Ovary (tissue), 10 donors: ENCODE measurements at regions of chr4 and their contacts with region 1.

Region 1: DNA sequence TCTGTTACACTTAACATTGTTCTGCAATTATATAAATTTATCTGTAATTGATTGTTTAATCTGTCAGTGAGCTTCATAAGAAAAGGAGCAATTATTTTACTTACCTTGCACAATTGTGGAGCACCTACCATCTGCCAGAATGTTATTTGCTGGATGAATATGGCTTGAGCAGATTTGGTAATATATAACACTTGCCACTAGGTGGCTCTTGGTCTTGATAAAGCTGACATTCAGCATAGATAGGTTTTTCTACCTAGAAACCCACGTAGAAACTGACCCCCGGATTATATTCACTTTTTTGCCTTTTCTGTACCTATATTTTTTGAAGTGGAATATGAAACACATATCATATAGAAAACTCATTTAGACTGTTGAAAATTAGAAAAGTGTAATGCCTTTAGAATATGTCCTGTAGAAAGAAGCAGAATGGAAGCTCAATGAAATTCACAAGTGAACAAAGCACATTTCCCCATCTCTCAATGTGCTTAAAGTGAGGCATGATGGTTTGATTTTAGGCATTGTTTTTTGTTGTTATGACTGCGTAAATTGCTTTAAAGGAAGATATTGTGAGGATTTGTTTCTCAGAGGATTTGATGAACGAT is 9.5 kb downstream of the RBPJ start:
- DNase-seq: no peak
- H3K4me3 ChIP-seq: no peak overlapping the region
- H3K27ac ChIP-seq: no peak overlapping the region
- H3K4me1 ChIP-seq: peaks cover 4% of the 10 kb centered on the region
- H3K27me3 ChIP-seq: no peaks in the 10 kb centered on the region
- CTCF ChIP-seq: peak; percentile 40 to 62 (median 46)
- EP300 ChIP-seq: no peak
- POLR2A ChIP-seq: no peak

Region 2: DNA sequence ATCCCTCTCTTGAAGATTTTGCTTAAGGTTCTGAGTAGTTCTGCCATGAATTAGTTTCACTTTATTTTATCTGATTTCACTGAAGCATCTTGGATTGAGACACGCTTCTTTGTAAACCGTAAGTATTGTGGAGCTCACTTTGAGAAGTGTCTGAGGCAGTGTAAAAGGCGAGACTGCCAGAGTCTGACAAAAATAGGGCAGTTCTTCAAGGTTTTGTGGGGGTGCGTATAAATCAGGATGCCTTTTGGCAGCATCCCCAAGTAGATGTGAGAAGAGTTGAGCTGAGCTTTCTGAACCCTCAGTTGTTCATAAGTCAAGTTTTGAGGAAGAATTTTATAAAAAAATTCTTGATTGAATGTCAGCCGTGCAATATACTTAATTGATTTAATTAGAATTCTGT is 66.8 kb after region 1 on chr4:
- intact Hi-C with region 1: loop called in 2 of 4 experiments (anchors 10 kb)
- DNase-seq: no peak
- H3K4me3 ChIP-seq: no peak overlapping the region
- H3K27ac ChIP-seq: no peak overlapping the region
- H3K4me1 ChIP-seq: peaks cover 3% of the 10 kb centered on the region
- H3K27me3 ChIP-seq: no peaks in the 10 kb centered on the region
- CTCF ChIP-seq: no peak
- EP300 ChIP-seq: no peak
- POLR2A ChIP-seq: no peak

Region 3: GRCh38 chr4:26632916-26633315 is 302.6 kb after region 1 on chr4:
- intact Hi-C with region 1: no loop called
- DNase-seq: no peak
- H3K4me3 ChIP-seq: no peak overlapping the region
- H3K27ac ChIP-seq: no peak overlapping the region
- H3K4me1 ChIP-seq: no peaks in the 10 kb centered on the region
- H3K27me3 ChIP-seq: no peaks in the 10 kb centered on the region
- CTCF ChIP-seq: no peak
- EP300 ChIP-seq: no peak
- POLR2A ChIP-seq: no peak

Region 4: DNA sequence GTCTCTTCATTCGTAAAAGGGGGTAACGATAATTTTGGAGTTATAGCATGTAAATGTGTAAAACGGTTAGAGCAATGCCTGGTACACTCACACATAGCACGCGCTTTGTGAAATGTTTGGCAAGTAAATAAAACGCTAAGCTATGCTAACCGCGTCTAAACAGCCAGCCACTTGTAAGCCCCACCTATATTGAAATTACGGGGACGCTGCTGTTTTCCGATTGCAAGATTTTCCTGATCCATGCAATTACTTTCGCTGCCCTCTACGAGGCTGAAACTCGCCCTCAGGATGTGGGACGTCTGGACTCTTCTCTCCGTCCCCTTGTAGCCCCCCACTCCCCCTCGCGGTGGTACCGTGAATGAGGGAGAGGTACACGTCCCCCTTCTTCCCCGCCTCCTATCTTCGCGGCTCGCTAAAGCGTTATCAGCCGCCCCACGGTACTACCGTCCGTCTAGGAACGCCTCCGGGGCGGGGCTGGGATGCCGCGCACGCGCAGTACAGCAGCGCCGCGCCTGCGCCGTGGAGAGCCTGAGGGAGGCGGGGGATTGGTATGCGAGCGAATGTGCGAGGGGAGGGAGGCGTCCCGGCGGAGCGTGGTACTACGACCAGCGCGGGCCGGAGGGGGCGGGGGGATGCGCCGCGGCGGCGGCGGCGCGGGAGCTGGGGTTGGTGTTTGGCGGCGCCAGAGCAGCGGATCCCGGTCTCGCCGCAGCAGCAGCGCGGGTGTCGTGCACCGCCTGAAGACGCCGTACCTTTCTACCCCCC is 530.1 kb after region 1 on chr4 and contains the start of gene STIM2:
- intact Hi-C with region 1: no loop called
- DNase-seq: peak; percentile 96 to 99 (median 97)
- H3K4me3 ChIP-seq: peak within 1 kb of the TSS; percentile 82
- H3K27ac ChIP-seq: peak within 1 kb of the TSS; percentile 96
- H3K4me1 ChIP-seq: peaks cover 4% of the 10 kb centered on the region
- H3K27me3 ChIP-seq: no peaks in the 10 kb centered on the region
- CTCF ChIP-seq: peak; percentile 29 to 68 (median 61)
- EP300 ChIP-seq: no peak
- POLR2A ChIP-seq: peak; percentile 65
- total RNA-seq, gene STIM2: 28.7 to 47.9 (median 40.2) TPM

Region 5: DNA sequence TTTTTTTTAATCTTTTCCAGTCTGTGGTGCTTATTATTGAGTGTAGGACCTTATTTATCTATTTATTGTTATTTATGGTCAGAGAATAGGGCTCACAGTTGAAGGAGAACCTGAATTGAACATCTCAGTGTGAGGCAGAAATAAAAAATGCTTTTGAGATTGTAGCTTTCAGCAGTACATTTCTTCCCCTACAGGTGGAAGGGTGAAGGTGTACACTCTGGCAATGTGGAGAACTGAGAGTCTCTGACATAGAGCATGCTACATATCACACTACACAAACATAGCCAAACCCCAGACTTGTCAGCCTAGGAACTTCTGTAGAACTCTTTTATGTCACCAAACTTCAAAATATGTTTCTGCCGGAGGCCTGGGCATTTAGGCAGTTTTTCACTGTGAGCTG is 670.5 kb after region 1 on chr4:
- intact Hi-C with region 1: loop called in 1 of 4 experiments (anchors 10 kb)
- DNase-seq: no peak
- H3K4me3 ChIP-seq: no peak overlapping the region
- H3K27ac ChIP-seq: no peak overlapping the region
- H3K4me1 ChIP-seq: no peaks in the 10 kb centered on the region
- H3K27me3 ChIP-seq: no peaks in the 10 kb centered on the region
- CTCF ChIP-seq: no peak
- EP300 ChIP-seq: no peak
- POLR2A ChIP-seq: no peak